CD4-positive, alpha-beta memory T cell (primary cell): ENCODE measurements at regions of chr19 and their contacts with region 1.

Region 1: GRCh38 chr19:2070436-2070827 is 19.4 kb upstream of the MKNK2 start:
- DNase-seq: no peak
- H3K4me3 ChIP-seq: no peak overlapping the region
- H3K4me3 Mint-ChIP-seq: no peak overlapping the region
- H3K27ac ChIP-seq: no peak overlapping the region
- H3K27ac Mint-ChIP-seq: peak overlapping the region in 2 of 7 donors; percentile 29 to 80
- H3K4me1 ChIP-seq: peaks cover 21% of the 10 kb centered on the region
- H3K4me1 Mint-ChIP-seq: peaks cover 5 to 25% (median 13%) of the 10 kb centered on the region in 4 donors
- H3K27me3 ChIP-seq: no peaks in the 10 kb centered on the region
- H3K27me3 Mint-ChIP-seq: no peaks in the 10 kb centered on the region

Region 2: GRCh38 chr19:1929021-1929742 is 141.2 kb before region 1 on chr19:
- CTCF ChIA-PET with region 1: interaction called, 14 read pairs
- POLR2A ChIA-PET with region 1: interaction called, 5 read pairs
- intact Hi-C with region 1: loop called (anchors 5 kb)
- DNase-seq: peak; percentile 72 to 82 (median 76)
- H3K4me3 ChIP-seq: peak overlapping the region in 1 of 2 donors; percentile 13
- H3K4me3 Mint-ChIP-seq: peak overlapping the region; percentile 68 to 86 (median 78)
- H3K27ac ChIP-seq: no peak overlapping the region
- H3K27ac Mint-ChIP-seq: peak overlapping the region; percentile 50 to 91 (median 67)
- H3K4me1 ChIP-seq: peaks cover 31% of the 10 kb centered on the region
- H3K4me1 Mint-ChIP-seq: peaks cover 15 to 34% (median 24%) of the 10 kb centered on the region in 4 donors
- H3K27me3 ChIP-seq: no peaks in the 10 kb centered on the region
- H3K27me3 Mint-ChIP-seq: no peaks in the 10 kb centered on the region

Region 3: GRCh38 chr19:2016041-2016807 is 54.2 kb before region 1 on chr19:
- CTCF ChIA-PET with region 1: interaction called, 40 read pairs
- POLR2A ChIA-PET with region 1: interaction called, 11 read pairs
- intact Hi-C with region 1: loop called (anchors 1 kb)
- DNase-seq: peak; percentile 43 to 78 (median 55)
- H3K4me3 ChIP-seq: no peak overlapping the region
- H3K4me3 Mint-ChIP-seq: peak overlapping the region; percentile 43 to 65 (median 60)
- H3K27ac ChIP-seq: peak overlapping the region; percentile 18
- H3K27ac Mint-ChIP-seq: peak overlapping the region in 6 of 7 donors; percentile 36 to 91 (median 64)
- H3K4me1 ChIP-seq: peaks cover 16% of the 10 kb centered on the region
- H3K4me1 Mint-ChIP-seq: peaks cover 7 to 25% (median 16%) of the 10 kb centered on the region in 4 donors
- H3K27me3 ChIP-seq: no peaks in the 10 kb centered on the region
- H3K27me3 Mint-ChIP-seq: no peaks in the 10 kb centered on the region

Region 4: GRCh38 chr19:2041683-2042484 is 28.5 kb before region 1 on chr19:
- CTCF ChIA-PET with region 1: interaction called, 10 read pairs
- POLR2A ChIA-PET with region 1: interaction called, 27 read pairs
- intact Hi-C with region 1: no loop called
- DNase-seq: peak; percentile 99 to 100 (median 99)
- H3K4me3 ChIP-seq: peak overlapping the region; percentile 36 to 57
- H3K4me3 Mint-ChIP-seq: peak overlapping the region; percentile 28 to 74 (median 60)
- H3K27ac ChIP-seq: peak overlapping the region; percentile 97
- H3K27ac Mint-ChIP-seq: peak overlapping the region; percentile 92 to 98 (median 96)
- H3K4me1 ChIP-seq: peaks cover 61% of the 10 kb centered on the region
- H3K4me1 Mint-ChIP-seq: peaks cover 9 to 51% (median 27%) of the 10 kb centered on the region in 4 donors
- H3K27me3 ChIP-seq: no peaks in the 10 kb centered on the region
- H3K27me3 Mint-ChIP-seq: no peaks in the 10 kb centered on the region

Region 5: GRCh38 chr19:2096480-2097329 is 26.3 kb after region 1 on chr19 and contains the start of gene IZUMO4:
- CTCF ChIA-PET with region 1: interaction called, 20 read pairs
- POLR2A ChIA-PET with region 1: interaction called, 19 read pairs
- intact Hi-C with region 1: no loop called
- DNase-seq: peak; percentile 98 to 100 (median 99)
- H3K4me3 ChIP-seq: peak within 1 kb of the TSS; percentile 49 to 85
- H3K4me3 Mint-ChIP-seq: peak within 1 kb of the TSS; percentile 91 to 97 (median 96)
- H3K27ac ChIP-seq: peak within 1 kb of the TSS; percentile 81
- H3K27ac Mint-ChIP-seq: peak within 1 kb of the TSS; percentile 95 to 99 (median 96)
- H3K4me1 ChIP-seq: peaks cover 38% of the 10 kb centered on the region
- H3K4me1 Mint-ChIP-seq: peaks cover 12 to 44% (median 28%) of the 10 kb centered on the region in 4 donors
- H3K27me3 ChIP-seq: no peaks in the 10 kb centered on the region
- H3K27me3 Mint-ChIP-seq: no peaks in the 10 kb centered on the region
- total RNA-seq, gene IZUMO4: 18.6 to 22.1 TPM